ENCODE measurements at regions of chr12 and their contacts with region 1.

Region 1: DNA sequence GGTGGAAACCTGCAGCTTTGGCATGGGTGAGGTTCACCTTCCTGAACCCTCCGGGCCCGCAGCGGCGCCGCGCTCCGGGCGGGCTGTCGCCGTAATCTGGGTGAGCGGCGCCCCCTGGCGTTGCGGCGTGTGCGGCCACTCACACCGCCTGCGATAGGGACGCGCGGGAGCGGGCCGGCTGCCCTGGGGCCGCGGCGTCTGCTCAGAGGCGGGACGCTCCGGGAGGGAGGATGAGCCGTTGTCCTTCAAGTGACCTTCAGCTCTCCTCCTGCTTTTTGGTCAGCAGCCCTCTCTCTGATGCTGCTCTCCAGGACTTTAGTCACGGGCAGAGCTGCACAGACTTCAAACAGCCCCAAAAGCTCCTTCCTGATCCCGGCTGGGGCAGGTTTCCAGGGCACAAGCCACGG is 211.7 kb upstream of the FKBP4 start:
- DNase-seq: peak; percentile 62
- H3K4me3 Mint-ChIP-seq: no peak overlapping the region
- H3K27ac Mint-ChIP-seq: no peak overlapping the region
- H3K4me1 Mint-ChIP-seq: peaks cover 3% of the 10 kb centered on the region
- H3K27me3 Mint-ChIP-seq: peaks cover 31% of the 10 kb centered on the region

Region 2: DNA sequence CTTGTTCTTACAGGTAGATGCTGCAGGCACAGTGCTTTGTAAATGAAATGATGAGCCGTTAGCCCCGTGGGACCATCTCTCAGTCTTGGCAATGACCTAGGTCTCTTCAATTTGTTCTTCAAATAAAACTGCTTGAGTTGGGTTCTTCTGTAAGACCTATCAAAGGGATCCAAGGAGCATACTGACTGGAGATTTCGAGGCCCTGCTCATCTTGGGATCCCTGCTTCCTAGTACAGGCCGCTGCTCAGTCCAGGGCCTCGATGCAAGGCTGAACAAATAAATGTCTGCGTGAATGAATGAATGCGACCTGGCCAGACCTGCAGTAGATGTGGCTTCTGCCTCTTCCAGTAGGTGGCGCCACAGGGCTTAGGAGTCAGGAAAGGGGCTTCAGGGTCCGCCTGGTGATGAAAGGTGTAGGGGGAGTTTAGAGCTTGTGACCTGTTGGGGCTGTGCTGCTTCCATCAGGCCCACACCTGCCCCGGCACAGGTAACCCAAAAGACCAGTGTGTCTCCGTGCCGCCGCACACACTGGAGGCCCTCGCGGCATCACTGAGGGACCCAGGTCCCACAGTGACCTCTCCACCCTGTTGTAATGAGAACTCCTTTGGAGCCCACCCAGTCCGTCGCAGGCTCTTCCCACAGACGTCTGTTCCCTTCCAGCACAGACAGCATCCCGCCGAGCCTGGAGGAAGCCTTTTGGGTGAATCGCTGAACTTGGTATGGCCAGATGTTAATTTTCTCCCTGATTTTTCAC is 525.9 kb before region 1 on chr12:
- CTCF ChIA-PET with region 1: no interaction called
- intact Hi-C with region 1: loop called (anchors 5 kb)
- DNase-seq: peak; percentile 68
- H3K4me3 Mint-ChIP-seq: no peak overlapping the region
- H3K27ac Mint-ChIP-seq: no peak overlapping the region
- H3K4me1 Mint-ChIP-seq: peaks cover 10% of the 10 kb centered on the region
- H3K27me3 Mint-ChIP-seq: peaks cover 30% of the 10 kb centered on the region

Region 3: DNA sequence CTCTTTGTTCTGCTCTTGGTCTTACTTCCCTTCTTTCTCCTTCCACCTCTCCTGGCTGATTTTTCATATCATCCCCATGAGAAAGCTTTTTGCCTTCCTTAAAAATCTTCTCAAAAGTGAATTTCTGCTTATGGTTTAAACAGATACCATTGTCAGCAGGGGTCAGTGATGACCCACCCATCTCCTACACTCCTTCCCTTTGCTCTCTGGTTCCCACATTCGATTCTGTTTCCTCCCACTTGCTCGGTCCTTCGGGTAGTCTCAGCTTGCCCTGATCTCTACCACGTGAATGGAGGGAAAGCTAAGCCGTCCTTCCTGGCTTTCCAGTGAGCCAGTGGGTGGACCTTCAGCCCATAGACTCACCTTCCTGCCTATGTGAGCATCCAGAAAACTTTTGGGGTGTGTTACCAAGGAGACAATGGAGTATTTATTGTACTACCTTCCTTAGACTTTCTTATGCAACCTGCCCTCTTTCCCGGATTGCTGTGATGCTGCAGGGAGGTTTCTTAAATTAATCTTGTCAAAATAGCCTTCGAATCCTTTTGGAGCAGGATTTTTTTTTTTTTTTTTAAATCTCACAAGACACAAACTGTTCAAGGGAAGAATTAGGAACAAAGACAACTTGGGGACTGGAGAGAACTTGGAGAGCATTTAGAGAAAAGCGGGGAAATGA is 224.0 kb before region 1 on chr12:
- CTCF ChIA-PET with region 1: interaction called, 3 read pairs
- intact Hi-C with region 1: loop called (anchors 1 kb)
- DNase-seq: peak; percentile 16
- H3K4me3 Mint-ChIP-seq: no peak overlapping the region
- H3K27ac Mint-ChIP-seq: no peak overlapping the region
- H3K4me1 Mint-ChIP-seq: peaks cover 24% of the 10 kb centered on the region
- H3K27me3 Mint-ChIP-seq: peaks cover 7% of the 10 kb centered on the region

Region 4: GRCh38 chr12:2382370-2383155 is 200.5 kb before region 1 on chr12:
- CTCF ChIA-PET with region 1: interaction called, 4 read pairs
- intact Hi-C with region 1: loop called (anchors 5 kb)
- DNase-seq: no peak
- H3K4me3 Mint-ChIP-seq: no peak overlapping the region
- H3K27ac Mint-ChIP-seq: no peak overlapping the region
- H3K4me1 Mint-ChIP-seq: no peaks in the 10 kb centered on the region
- H3K27me3 Mint-ChIP-seq: peaks cover 7% of the 10 kb centered on the region

Region 5: GRCh38 chr12:2627840-2628201 is 44.7 kb after region 1 on chr12:
- CTCF ChIA-PET with region 1: no interaction called
- intact Hi-C with region 1: no loop called
- DNase-seq: peak; percentile 7
- H3K4me3 Mint-ChIP-seq: no peak overlapping the region
- H3K27ac Mint-ChIP-seq: no peak overlapping the region
- H3K4me1 Mint-ChIP-seq: peaks cover 4% of the 10 kb centered on the region
- H3K27me3 Mint-ChIP-seq: peaks cover 40% of the 10 kb centered on the region

Measured in activated naive CD4-positive, alpha-beta T cell treated with anti-CD3 and anti-CD28 coated beads for 36 hours (primary cell).